OCI-LY7 (cell line): ENCODE measurements at regions of chr7 and their contacts with region 1.

Region 1: DNA sequence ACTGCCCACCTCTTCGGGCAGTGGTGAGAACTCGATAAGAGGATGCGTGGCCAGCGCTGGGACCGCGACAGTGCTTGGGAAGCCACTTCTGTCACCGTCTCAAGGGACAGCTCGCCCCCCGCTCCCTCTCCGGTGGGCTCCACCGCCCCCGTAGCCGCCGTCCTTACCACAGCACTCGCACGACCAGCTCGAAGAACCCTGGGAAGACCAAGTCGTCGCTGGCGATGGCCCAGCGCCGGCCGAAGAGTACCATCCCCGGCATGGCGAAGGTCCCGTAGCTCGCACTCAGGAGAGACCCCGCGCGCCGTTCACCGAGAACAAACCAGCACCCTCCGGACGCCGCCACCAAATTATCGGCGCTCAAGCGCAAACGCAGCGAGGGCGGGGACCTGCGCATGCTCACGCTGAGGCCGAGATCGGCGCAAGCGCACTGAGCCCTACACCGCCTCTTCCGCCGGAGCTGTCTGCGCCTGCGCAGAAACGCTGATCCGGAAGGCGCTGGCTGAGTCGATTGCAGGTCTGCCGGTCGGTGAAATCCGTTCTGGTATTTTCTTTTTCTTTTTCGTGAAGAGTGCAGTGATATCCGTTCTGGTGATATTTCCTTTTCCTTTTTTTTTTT is at the start of gene DAGLB:
- DNase-seq: peak; percentile 97
- H3K4me3 ChIP-seq: peak within 1 kb of the TSS; percentile 89
- H3K27ac ChIP-seq: peak within 1 kb of the TSS; percentile 58
- H3K4me1 ChIP-seq: peaks cover 13% of the 10 kb centered on the region
- CTCF ChIP-seq: no peak
- total RNA-seq, gene DAGLB: 12.4 and 17.5 TPM in 2 replicates

Region 2: GRCh38 chr7:6419310-6419773 is 28.3 kb before region 1 on chr7:
- CTCF ChIA-PET with region 1: no interaction called
- POLR2A ChIA-PET with region 1: no interaction called
- intact Hi-C with region 1: no loop called
- DNase-seq: no peak
- H3K4me3 ChIP-seq: no peak overlapping the region
- H3K27ac ChIP-seq: no peak overlapping the region
- H3K4me1 ChIP-seq: no peaks in the 10 kb centered on the region
- CTCF ChIP-seq: no peak

Region 3: DNA sequence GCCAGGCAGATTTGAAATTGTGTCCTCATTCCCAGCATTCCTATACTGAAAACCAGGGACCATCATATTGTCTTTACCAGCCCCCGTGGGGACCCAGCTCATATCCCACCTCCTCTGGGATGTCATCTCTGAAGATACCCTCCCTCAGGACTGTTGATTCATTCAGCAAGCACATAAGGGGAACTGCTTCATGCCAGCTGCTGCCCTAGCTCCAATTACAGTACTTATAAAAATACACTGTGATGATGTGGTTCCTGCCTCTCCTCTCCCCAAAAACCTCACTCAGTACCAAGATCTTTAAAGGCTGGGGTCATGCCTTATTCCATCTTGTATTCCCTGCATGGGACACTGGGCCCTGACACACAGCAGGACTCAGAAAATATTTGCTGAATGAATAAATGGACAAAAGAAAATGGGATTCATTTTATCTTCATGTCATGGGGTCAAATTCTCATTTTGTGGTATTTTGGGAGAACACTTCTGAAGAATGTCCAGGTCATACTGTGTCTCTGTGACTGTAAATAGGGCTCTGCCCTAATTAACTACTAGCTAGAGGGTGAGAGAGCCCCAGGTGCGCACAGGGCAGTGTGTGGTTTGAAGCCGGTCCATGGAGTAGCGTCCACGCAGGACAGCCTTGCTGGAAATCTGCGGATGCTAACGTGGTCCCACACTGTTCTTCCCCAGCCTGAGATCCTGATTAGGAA is 29.1 kb after region 1 on chr7:
- CTCF ChIA-PET with region 1: no interaction called
- POLR2A ChIA-PET with region 1: interaction called, 10 read pairs
- intact Hi-C with region 1: no loop called
- DNase-seq: peak; percentile 14
- H3K4me3 ChIP-seq: no peak overlapping the region
- H3K27ac ChIP-seq: no peak overlapping the region
- H3K4me1 ChIP-seq: peaks cover 37% of the 10 kb centered on the region
- CTCF ChIP-seq: no peak

Region 4: DNA sequence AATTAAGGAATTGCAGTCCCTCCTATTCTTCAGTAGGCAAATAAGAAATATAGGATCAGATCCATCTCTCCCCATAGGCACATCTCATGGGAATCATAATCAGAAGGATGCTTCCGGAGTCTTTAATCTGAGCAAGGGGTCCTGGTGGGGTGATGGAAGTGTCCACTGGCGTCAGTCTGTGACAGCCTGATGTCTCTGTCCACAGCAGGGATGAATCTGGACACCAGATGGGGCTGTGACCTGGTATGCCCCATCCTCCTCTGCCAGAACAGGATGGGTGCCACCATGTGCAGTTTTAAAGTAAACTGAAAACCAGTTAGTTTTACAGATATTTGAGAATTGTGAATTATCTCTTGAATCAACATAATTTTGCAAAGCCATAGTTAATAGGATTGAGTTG is 883.3 kb after region 1 on chr7:
- CTCF ChIA-PET with region 1: no interaction called
- POLR2A ChIA-PET with region 1: no interaction called
- intact Hi-C with region 1: no loop called
- DNase-seq: no peak
- H3K4me3 ChIP-seq: no peak overlapping the region
- H3K27ac ChIP-seq: no peak overlapping the region
- H3K4me1 ChIP-seq: no peaks in the 10 kb centered on the region
- CTCF ChIP-seq: no peak

Region 5: DNA sequence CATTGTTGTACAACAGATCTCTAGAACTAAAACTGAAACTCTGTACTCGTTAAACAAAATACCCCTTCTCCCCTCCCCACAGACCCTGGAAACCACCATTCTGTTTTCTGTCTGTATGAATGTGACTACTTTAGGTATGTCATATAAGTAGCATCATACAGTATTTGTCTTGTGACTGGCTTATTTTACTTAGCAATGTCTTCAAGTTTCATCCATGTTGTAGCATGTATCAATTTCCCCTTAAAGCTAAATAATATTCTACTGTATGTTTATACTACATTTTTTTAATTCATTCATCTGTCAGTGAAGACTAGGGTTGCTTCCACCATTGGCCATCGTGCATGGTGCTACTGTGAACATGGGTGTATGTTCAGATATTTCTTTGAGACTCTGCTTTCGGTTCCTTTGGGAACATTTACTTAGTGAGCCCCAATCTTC is 1341.9 kb after region 1 on chr7:
- CTCF ChIA-PET with region 1: no interaction called
- POLR2A ChIA-PET with region 1: interaction called, 11 read pairs
- intact Hi-C with region 1: no loop called
- DNase-seq: no peak
- H3K4me3 ChIP-seq: no peak overlapping the region
- H3K27ac ChIP-seq: no peak overlapping the region
- H3K4me1 ChIP-seq: no peaks in the 10 kb centered on the region
- CTCF ChIP-seq: no peak